Upper lobe of right lung (tissue), 1 donor: ENCODE measurements at regions of chr20 and their contacts with region 1.

Region 1: GRCh38 chr20:63973636-63974402 is 4.1 kb upstream of the ZNF512B start:
- DNase-seq: peak; percentile 95
- ATAC-seq: peak; percentile 90
- H3K4me3 ChIP-seq: peak overlapping the region; percentile 43
- H3K27ac ChIP-seq: no peak overlapping the region
- H3K4me1 ChIP-seq: peaks cover 29% of the 10 kb centered on the region
- H3K27me3 ChIP-seq: no peaks in the 10 kb centered on the region
- CTCF ChIP-seq: peak; percentile 99

Region 2: DNA sequence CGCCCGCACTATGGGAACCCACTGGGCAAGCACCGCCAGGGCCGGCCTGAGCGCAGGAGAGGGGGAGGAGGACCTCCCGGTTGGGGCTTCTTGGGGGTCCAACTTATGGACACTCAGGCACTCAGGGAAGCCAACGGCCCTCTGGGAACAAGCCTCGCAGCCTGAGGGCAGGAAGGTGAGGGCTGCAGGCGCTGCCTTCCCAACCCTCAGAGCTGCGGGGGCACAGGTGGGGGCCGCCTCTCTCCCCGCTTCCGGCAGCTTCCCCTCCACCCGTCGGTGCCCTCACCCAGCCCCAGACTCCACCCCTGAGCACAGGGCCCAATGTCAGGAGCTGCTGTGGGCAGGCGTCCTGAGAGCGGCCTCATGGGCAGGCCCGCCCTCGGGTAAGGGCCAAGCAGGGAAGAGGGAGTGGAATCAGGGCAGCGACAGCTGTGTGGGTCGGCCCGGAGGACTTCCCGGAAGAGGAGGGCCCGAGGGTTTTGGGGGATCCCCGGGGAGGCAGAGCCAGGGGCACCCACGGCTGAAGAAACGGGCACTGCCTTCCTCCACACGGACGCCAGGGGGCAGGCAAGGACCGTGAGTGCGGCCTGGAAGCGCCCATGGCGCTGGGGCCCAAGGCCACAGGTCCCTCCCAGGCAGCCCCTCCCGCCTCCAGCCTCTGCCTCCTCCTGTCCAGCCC is 436.2 kb before region 1 on chr20:
- intact Hi-C with region 1: loop called (anchors 5 kb)
- DNase-seq: peak; percentile 99
- ATAC-seq: peak; percentile 92
- H3K4me3 ChIP-seq: peak overlapping the region; percentile 51
- H3K27ac ChIP-seq: peak overlapping the region; percentile 87
- H3K4me1 ChIP-seq: peaks cover 20% of the 10 kb centered on the region
- H3K27me3 ChIP-seq: no peaks in the 10 kb centered on the region
- CTCF ChIP-seq: peak; percentile 98